Activated naive CD4-positive, alpha-beta T cell treated with anti-CD3 and anti-CD28 coated beads for 36 hours (primary cell): ENCODE measurements at regions of chr2 and their contacts with region 1.

Region 1: GRCh38 chr2:195656859-195657633 is at the start of gene SLC39A10:
- DNase-seq: peak; percentile 98
- H3K4me3 Mint-ChIP-seq: peak within 1 kb of the TSS; percentile 99
- H3K27ac Mint-ChIP-seq: peak within 1 kb of the TSS; percentile 99
- H3K4me1 Mint-ChIP-seq: peaks cover 26% of the 10 kb centered on the region
- H3K27me3 Mint-ChIP-seq: peaks cover 2% of the 10 kb centered on the region
- total RNA-seq, gene SLC39A10: 37.4 to 41.0 TPM

Region 2: DNA sequence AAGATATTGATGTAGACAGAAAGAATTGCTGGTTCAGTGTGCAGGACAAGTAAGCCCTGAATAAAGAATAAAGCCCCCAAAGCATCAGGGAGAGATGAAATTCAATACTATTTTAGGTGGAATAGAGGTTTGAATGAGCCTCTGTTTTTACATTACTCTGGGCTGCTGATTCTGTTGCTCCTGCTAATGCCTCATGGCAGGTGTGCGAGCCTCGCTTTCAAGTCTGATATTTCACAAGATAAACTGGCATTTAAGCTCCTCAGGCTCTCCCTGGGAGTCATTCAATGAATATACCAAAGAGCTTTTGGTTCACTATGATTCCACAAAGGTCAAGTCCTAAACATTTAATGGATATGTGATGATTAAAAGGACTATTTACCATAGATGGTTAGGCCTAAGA is 601.0 kb before region 1 on chr2:
- CTCF ChIA-PET with region 1: no interaction called
- intact Hi-C with region 1: no loop called
- DNase-seq: no peak
- H3K4me3 Mint-ChIP-seq: no peak overlapping the region
- H3K27ac Mint-ChIP-seq: no peak overlapping the region
- H3K4me1 Mint-ChIP-seq: no peaks in the 10 kb centered on the region
- H3K27me3 Mint-ChIP-seq: no peaks in the 10 kb centered on the region

Region 3: DNA sequence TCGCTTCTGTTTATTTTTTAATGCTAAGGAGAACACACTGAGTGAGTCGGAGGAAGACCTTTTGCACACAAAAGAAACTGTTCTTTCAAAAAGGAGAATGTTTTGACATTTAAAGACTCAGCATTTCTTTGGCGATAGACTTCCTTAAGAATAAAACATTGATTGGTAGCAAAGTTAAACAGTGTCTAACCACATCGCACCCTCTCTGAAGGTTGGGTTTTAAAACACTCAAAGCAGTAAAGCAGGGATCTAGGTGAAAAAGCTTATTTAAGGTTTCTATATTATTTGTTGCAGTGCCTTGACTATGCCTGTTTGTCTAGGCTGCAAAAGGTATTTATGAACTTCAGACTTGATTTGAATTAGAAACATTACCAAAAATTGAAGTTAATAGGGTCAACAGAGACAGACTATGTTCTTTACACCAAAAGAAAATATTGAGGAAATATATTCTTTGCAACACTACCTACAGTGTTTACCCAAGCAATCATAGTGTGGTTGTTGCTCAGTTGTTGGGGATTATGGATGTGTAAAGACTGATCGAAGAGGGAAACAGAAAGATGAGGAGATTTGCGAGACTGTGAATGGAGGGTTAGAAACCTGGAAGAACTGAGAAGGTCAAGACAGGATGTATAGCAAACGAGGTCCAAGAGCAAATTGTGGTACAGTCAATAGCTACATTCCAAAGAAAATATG is 297.9 kb before region 1 on chr2:
- CTCF ChIA-PET with region 1: no interaction called
- intact Hi-C with region 1: loop called (anchors 2 kb)
- DNase-seq: no peak
- H3K4me3 Mint-ChIP-seq: no peak overlapping the region
- H3K27ac Mint-ChIP-seq: no peak overlapping the region
- H3K4me1 Mint-ChIP-seq: peaks cover 26% of the 10 kb centered on the region
- H3K27me3 Mint-ChIP-seq: no peaks in the 10 kb centered on the region

Region 4: DNA sequence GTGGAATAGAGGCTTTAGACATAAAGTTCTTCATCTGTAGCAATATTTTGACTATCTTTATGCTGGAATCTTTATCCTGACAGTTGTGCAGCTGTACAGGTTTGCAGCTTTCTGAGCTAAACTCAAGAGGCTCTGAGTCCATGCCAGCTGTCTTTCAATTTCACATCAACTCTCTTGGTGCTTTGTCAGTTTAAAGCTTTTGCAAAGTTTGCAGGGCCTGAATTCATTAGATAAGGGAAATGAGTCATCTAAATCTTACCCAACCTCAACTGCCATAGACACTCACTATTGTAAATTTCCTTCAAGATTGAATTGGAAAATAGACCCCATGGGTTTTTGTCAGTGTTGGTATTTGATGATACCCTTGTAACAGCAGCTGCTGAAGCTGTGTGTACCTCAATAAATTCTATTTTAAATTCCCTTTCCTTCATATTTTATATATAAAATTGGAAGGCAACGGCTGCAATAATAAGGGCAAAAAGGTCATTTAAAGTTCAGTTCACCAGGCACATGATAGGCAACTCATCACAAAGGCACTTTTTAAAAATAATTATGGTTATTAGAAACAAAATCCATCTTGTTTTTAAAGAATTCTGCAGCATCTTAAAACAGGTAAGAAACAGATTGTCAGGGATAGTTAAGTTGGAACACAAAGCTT is 169.9 kb before region 1 on chr2:
- CTCF ChIA-PET with region 1: interaction called, 3 read pairs
- intact Hi-C with region 1: loop called (anchors 1 kb)
- DNase-seq: peak; percentile 34
- H3K4me3 Mint-ChIP-seq: no peak overlapping the region
- H3K27ac Mint-ChIP-seq: peak overlapping the region; percentile 64
- H3K4me1 Mint-ChIP-seq: peaks cover 16% of the 10 kb centered on the region
- H3K27me3 Mint-ChIP-seq: no peaks in the 10 kb centered on the region

Region 5: GRCh38 chr2:195543902-195544894 is 112.8 kb before region 1 on chr2:
- CTCF ChIA-PET with region 1: no interaction called
- intact Hi-C with region 1: loop called (anchors 1 kb)
- DNase-seq: peak; percentile 72
- H3K4me3 Mint-ChIP-seq: peak overlapping the region; percentile 40
- H3K27ac Mint-ChIP-seq: peak overlapping the region; percentile 91
- H3K4me1 Mint-ChIP-seq: peaks cover 67% of the 10 kb centered on the region
- H3K27me3 Mint-ChIP-seq: no peaks in the 10 kb centered on the region

Region 6: GRCh38 chr2:196171248-196171871 is 514.3 kb after region 1 on chr2 and contains the start of gene STK17B:
- CTCF ChIA-PET with region 1: no interaction called
- intact Hi-C with region 1: loop called (anchors 2 kb)
- DNase-seq: peak; percentile 98
- H3K4me3 Mint-ChIP-seq: peak within 1 kb of the TSS; percentile 93
- H3K27ac Mint-ChIP-seq: peak within 1 kb of the TSS; percentile 92
- H3K4me1 Mint-ChIP-seq: peaks cover 34% of the 10 kb centered on the region
- H3K27me3 Mint-ChIP-seq: no peaks in the 10 kb centered on the region
- total RNA-seq, gene STK17B: 141 to 143 TPM

Region 7: DNA sequence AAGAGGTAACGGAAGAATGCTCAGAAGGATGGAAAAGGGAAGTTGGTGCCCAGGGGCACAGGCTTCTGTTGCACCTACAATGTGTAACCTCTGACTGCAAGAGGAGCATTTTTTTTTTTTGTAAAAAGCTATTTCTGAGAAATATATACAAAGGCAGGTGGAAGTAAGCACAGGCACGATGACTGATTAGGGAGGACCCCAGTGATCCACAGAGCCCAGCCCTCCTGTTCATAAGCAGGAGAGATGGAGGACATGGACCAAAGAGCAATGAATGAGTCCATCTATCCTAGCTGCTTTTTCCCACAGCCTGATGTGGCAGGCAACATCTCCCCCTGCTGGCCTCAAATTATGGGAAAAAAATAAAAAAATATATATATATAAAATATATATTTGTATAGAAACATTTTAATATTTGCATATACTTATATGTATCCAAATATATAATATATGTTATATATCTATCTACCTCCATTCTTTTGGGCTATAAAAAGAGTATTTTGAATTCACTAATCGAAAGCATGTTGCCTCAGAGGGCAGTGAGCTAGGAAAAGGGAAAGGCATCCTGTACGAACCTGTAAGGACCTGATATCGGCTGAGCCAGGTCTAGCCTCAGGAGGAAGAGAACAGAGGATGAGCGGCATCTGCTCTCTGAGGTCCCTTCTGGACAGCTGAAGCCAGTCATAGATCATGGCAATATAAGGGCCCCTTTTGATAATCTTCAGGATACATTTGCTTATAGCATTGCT is 680.3 kb after region 1 on chr2:
- CTCF ChIA-PET with region 1: no interaction called
- intact Hi-C with region 1: loop called (anchors 5 kb)
- DNase-seq: peak; percentile 37
- H3K4me3 Mint-ChIP-seq: no peak overlapping the region
- H3K27ac Mint-ChIP-seq: no peak overlapping the region
- H3K4me1 Mint-ChIP-seq: peaks cover 8% of the 10 kb centered on the region
- H3K27me3 Mint-ChIP-seq: no peaks in the 10 kb centered on the region